PC-9 (cell line): ENCODE measurements at regions of chr14 and their contacts with region 1.

Region 1: GRCh38 chr14:21510735-21511657 is at the start of gene METTL3:
- DNase-seq: peak; percentile 90 to 96
- H3K4me3 ChIP-seq: peak within 1 kb of the TSS; percentile 63
- H3K27ac ChIP-seq: peak within 1 kb of the TSS; percentile 67
- H3K4me1 ChIP-seq: peaks cover 10% of the 10 kb centered on the region
- H3K27me3 ChIP-seq: no peaks in the 10 kb centered on the region
- CTCF ChIP-seq: no peak
- total RNA-seq, gene METTL3: 27.9 and 30.7 TPM in 2 replicates

Region 2: GRCh38 chr14:20305265-20306078 is 1205.5 kb before region 1 on chr14 and contains the start of gene TTC5:
- CTCF ChIA-PET with region 1: no interaction called
- POLR2A ChIA-PET with region 1: no interaction called
- intact Hi-C with region 1: no loop called
- DNase-seq: peak; percentile 64 to 78
- H3K4me3 ChIP-seq: peak within 1 kb of the TSS; percentile 88
- H3K27ac ChIP-seq: no peak within 1 kb of the TSS
- H3K4me1 ChIP-seq: peaks cover 7% of the 10 kb centered on the region
- H3K27me3 ChIP-seq: no peaks in the 10 kb centered on the region
- CTCF ChIP-seq: peak; percentile 81
- total RNA-seq, gene TTC5: 12.6 and 15.8 TPM in 2 replicates

Region 3: DNA sequence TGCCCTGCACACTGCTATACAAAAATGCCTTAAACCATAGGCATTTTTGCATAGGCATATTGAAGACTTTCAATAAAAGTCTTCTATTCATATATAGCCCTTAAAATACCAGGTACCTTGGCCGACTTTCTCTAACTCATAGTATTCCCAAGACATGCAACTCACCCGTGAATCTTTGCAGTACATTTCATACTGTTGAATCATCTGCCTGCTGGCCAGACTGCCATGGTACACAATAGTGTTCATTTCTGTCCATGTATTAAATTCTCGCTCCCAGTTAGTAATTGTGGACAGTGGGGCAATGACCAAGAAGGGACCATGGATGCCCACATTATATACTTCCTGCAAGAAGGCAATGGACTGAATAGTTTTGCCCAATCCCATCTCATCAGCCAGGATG is 102.8 kb before region 1 on chr14:
- CTCF ChIA-PET with region 1: no interaction called
- POLR2A ChIA-PET with region 1: no interaction called
- intact Hi-C with region 1: no loop called
- DNase-seq: no peak
- H3K4me3 ChIP-seq: no peak overlapping the region
- H3K27ac ChIP-seq: no peak overlapping the region
- H3K4me1 ChIP-seq: no peaks in the 10 kb centered on the region
- H3K27me3 ChIP-seq: no peaks in the 10 kb centered on the region
- CTCF ChIP-seq: no peak

Region 4: DNA sequence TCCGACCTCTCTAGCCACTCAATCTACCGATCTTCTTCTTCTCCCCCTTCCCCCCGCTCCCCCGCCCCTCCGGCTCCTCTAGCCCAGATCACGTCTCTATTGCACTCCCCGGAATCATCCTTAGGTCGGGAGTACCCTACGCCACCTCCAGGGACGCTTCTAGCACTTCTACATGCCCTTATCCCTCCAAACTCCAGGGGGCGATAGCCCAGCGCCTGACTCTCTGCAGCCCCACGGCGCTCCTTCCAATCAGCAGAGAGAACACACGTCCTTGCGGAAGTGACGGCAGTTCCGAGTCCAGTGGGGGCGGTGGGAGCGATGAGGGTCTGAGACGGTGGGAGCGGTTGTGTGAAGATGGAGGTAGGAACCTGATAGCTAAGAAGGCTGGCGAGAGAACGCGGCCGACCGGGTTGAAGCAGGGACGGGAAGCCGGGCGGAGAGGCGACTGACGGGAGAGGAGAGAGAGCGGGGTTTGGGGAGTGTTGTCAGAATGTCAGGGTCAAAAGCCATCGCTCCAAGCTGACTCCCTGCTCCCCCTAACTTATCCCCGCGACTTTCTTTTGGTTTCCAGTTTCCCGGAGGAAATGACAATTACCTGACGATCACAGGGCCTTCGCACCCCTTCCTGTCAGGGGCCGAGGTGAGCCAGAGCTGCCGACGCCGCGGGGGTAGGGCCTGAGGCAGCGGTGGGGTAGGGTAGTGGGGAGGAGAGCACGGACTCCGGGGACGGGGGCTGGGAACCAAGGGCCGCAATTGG is 33.9 kb before region 1 on chr14 and contains the starts of genes RAB2B and TOX4:
- CTCF ChIA-PET with region 1: no interaction called
- POLR2A ChIA-PET with region 1: interaction called, 6 read pairs
- intact Hi-C with region 1: loop called (anchors 2 kb)
- DNase-seq: peak; percentile 91 to 92
- H3K4me3 ChIP-seq: peak within 1 kb of the TSS; percentile 92
- H3K27ac ChIP-seq: peak within 1 kb of the TSS; percentile 80
- H3K4me1 ChIP-seq: peaks cover 16% of the 10 kb centered on the region
- H3K27me3 ChIP-seq: no peaks in the 10 kb centered on the region
- CTCF ChIP-seq: peak; percentile 77
- total RNA-seq, gene RAB2B: 12.2 and 12.8 TPM in 2 replicates
- total RNA-seq, gene TOX4: 32.9 and 50.6 TPM in 2 replicates

Region 5: DNA sequence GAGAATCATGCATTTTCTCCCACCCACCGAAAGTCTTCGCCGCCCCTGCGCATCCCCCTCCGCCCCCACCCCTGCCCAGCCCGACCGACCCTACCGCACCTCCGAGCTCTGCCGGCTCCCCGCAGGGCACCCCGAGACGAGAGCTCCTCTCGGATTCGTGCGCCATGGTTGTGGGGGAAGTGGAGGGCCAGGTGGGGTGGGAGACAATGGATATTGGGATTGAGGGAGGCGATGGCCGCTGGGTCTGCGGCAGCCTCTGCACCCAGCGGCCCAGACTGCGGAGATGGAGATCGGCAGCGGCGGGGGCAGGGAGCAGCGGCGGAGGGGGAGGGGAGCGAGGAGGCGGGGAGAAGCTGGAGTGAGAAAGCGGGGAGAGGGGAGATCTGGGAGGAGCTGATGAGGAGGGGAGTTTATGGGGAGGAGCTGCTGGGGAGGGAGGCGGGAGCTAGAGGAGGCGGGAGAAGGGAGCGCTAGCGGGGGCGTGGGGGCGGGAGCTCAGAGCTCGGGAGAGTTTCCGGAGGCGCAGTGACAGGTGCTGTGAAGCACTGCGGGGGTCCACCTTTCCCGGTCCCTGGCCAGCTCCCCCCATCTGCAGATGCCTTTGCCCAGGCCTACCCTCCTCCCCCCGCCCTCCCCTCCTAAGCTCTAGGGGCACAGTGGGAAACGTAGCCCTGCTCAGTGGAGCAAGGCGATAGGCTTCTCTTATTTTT is 15.1 kb after region 1 on chr14 and contains the start of gene SALL2:
- CTCF ChIA-PET with region 1: no interaction called
- POLR2A ChIA-PET with region 1: interaction called, 11 read pairs
- intact Hi-C with region 1: loop called (anchors 1 kb)
- DNase-seq: peak; percentile 35 to 61
- H3K4me3 ChIP-seq: peak within 1 kb of the TSS; percentile 57; the same call in 1 of the 2 replicates
- H3K27ac ChIP-seq: no peak within 1 kb of the TSS
- H3K4me1 ChIP-seq: peaks cover 21% of the 10 kb centered on the region
- H3K27me3 ChIP-seq: no peaks in the 10 kb centered on the region
- CTCF ChIP-seq: no peak
- total RNA-seq, gene SALL2: 10.3 and 10.9 TPM in 2 replicates

Region 6: DNA sequence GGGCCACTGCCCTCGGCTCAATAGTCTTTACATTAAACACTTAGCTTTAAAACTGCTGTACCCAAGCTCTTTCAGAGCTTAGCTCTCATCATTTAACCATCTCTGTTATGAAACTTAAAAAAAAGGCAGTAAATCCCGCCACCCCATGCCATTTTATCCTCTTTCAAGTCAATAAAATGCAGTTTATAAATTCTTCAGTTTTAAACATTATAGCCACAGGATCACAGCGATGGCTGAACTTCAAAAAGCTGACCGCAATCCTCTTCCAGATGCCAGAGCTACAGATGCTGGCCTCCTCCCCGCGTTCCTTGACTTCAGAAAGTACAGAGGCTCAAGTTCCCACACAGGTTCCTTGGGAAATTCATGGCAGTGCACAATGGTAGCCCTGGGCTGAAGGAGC is 64.7 kb after region 1 on chr14:
- CTCF ChIA-PET with region 1: interaction called, 11 read pairs
- POLR2A ChIA-PET with region 1: no interaction called
- intact Hi-C with region 1: no loop called
- DNase-seq: no peak
- H3K4me3 ChIP-seq: no peak overlapping the region
- H3K27ac ChIP-seq: no peak overlapping the region
- H3K4me1 ChIP-seq: no peaks in the 10 kb centered on the region
- H3K27me3 ChIP-seq: no peaks in the 10 kb centered on the region; the same call in none of the 2 replicates
- CTCF ChIP-seq: no peak

Region 7: DNA sequence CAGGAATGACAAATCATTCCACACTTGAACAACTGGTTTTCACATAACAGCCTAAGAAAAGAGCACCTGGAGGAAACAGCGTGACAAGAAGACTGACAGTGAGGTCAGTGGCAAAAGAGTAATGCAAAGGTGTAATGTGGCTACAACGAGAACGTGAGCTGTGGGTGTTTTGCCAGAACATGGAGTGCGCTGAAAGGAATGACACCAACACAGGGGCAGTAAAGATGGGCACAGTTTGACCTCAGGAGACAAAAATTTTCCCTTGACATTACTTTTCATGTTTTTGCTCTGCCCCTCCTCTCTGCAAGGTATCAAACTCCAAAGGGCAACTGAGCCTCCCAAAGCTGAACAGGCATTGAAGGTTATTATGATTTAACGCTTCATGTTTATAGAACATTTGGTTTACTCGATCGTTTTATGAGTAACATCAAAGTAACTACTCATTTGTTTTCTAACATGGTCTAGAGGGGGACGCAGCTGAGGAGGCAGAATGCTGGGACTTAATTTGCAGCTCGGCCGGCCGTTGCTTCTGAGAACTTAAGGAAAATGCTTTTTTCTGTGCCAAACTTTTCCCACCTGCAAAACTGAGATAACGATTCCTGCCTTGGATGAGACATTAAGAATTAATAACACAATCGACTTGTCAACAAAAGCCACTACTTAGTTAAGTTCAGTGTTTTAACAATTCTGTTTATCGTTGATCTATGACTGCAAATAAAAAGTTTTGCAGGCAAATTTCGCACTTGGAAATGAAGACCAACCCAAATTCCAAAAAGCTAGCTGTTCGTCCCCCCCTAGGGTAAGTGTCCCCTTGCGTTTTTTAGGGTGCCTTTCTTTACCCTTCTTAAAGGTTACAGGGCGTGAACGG is 1444.9 kb after region 1 on chr14:
- CTCF ChIA-PET with region 1: no interaction called
- POLR2A ChIA-PET with region 1: interaction called, 12 read pairs
- intact Hi-C with region 1: no loop called
- DNase-seq: peak; percentile 28 to 79
- H3K4me3 ChIP-seq: peak overlapping the region; percentile 70
- H3K27ac ChIP-seq: peak overlapping the region; percentile 66
- H3K4me1 ChIP-seq: peaks cover 16% of the 10 kb centered on the region
- H3K27me3 ChIP-seq: no peaks in the 10 kb centered on the region
- CTCF ChIP-seq: no peak